ENCODE measurements at regions of chr1 and their contacts with region 1.

Region 1: DNA sequence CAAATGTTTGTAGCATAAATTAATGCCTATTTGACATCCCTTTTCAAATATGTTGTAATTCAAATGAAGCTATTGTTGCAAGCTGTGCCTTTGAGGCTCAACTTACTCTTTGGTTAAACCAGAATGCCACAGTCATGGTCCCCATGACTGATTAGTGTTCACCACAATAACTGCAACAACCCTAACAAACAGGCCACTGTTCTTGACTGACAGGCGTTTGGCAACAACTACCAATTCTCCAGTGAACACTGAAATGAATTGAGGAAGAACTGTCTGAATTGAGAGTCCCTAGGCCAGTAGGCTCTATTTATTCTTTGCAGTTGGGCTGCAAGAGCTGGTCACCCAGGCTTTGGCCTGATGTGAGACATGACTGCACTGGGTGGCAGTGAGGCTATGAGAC is 6.6 kb upstream of the TMEM167B start:
- DNase-seq: no peak
- ATAC-seq: peak; percentile 55
- H3K4me3 Mint-ChIP-seq: no peak overlapping the region
- H3K27ac Mint-ChIP-seq: peak overlapping the region; percentile 61
- H3K4me1 Mint-ChIP-seq: peaks cover 20% of the 10 kb centered on the region
- H3K27me3 Mint-ChIP-seq: no peaks in the 10 kb centered on the region

Region 2: GRCh38 chr1:109099938-109100773 is 16.2 kb after region 1 on chr1:
- CTCF ChIA-PET with region 1: interaction called, 24 read pairs
- DNase-seq: peak; percentile 98
- ATAC-seq: peak; percentile 94
- H3K4me3 Mint-ChIP-seq: peak overlapping the region; percentile 96
- H3K27ac Mint-ChIP-seq: peak overlapping the region; percentile 93
- H3K4me1 Mint-ChIP-seq: peaks cover 14% of the 10 kb centered on the region
- H3K27me3 Mint-ChIP-seq: no peaks in the 10 kb centered on the region

Measured in activated CD8-positive, alpha-beta memory T cell treated with anti-CD3 and anti-CD28 coated beads, Interleukin-2, amount 10 ng/mL, durations not matched to agents 7 days and 5 days (primary cell).